Dendritic cell treated with granulocyte-macrophage colony-stimulating factor and Interleukin-4, amounts not matched to agents 40 ng/mL and 50 ng/mL, for 4 days (primary cell): ENCODE measurements at regions of chr14 and their contacts with region 1.

Region 1: DNA sequence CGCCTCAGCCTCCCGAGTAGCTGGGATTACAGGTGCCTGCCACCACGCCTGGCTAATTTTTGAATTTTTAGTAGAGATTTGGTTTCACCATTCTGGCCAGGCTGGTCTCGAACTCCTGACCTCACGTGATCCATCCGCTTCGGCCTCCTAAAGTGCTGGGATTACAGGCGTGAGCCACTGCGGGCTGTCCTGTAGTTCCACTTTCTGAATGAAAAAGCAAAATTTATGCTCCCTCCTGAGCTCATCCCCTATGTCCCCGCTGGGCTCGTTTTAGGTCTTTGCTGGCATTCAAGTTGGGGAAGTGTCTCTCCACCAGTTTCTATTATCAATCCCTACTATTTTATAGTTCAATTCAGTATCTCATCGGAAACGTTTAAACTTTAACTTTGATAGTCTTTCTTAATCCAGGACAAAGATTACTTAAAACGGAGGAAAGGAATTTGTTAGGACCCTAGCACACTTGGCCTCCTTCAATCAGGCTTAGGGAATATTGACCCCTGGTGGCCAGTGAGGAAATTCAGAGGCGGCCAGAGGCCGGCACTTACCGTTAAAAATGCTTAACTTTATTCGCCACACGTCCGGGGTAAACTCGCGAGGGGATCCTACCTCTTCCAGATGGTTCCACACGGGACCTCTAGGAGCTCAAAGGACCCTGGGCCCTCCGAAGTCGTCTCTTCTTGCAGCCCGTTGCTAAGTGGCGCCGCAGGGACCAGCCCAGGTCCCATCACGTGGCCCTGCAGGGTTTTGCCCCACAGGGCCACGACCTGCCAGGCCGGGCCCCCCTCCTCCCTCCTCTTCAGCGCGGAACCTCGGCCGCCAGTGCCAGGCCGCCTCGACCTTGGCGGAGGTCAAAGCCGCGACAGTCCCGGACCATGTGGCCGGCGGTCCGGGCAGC is 11.4 kb upstream of the DNAL1 start:
- H3K4me3 Mint-ChIP-seq: peak overlapping the region; percentile 86
- H3K27ac Mint-ChIP-seq: peak overlapping the region; percentile 84
- H3K4me1 Mint-ChIP-seq: peaks cover 15% of the 10 kb centered on the region
- H3K27me3 Mint-ChIP-seq: peaks cover 37% of the 10 kb centered on the region

Region 2: DNA sequence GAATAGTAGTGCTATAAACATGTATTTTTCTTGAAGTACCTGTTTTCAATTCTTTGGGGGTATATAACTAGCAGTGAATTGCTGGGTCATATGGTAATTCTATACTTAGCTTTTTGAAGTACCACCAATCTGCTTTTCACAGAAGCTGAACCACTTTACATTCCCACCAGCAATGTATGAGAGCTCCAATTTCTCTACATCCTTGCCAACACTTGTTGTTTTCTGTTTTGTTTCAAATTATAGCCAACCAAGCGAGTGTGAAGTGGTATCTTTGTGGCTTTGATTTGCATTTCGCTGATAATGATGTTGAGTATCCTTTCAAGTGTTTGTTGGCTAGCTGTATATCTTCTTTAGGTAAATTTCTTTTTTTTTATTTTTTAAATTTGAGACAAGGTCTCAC is 300.3 kb before region 1 on chr14:
- intact Hi-C with region 1: no loop called
- H3K4me3 Mint-ChIP-seq: no peak overlapping the region
- H3K27ac Mint-ChIP-seq: no peak overlapping the region
- H3K4me1 Mint-ChIP-seq: peaks cover 7% of the 10 kb centered on the region
- H3K27me3 Mint-ChIP-seq: no peaks in the 10 kb centered on the region

Region 3: GRCh38 chr14:73418227-73418626 is 215.1 kb before region 1 on chr14:
- intact Hi-C with region 1: no loop called
- H3K4me3 Mint-ChIP-seq: no peak overlapping the region
- H3K27ac Mint-ChIP-seq: no peak overlapping the region
- H3K4me1 Mint-ChIP-seq: peaks cover 33% of the 10 kb centered on the region
- H3K27me3 Mint-ChIP-seq: no peaks in the 10 kb centered on the region

Region 4: DNA sequence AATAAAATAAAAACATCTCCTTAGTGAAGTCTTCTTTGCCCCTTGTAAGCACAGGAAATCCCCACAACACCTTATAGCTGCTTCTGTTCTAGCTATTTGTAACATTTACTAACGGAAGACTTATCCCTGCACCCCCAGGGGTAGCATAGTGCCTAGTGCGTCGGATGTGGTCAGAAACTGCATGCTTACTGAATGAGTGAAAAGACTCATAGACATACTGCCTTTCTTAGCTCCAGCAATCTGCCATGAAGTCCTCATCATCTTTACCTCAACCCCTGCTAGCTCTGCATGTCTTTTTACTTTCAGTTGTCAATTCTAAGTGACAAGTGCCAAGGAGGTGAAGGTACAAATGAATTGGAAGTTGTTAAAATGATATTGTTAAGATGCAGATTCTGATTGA is 129.7 kb before region 1 on chr14:
- intact Hi-C with region 1: loop called (anchors 1 kb)
- H3K4me3 Mint-ChIP-seq: no peak overlapping the region
- H3K27ac Mint-ChIP-seq: no peak overlapping the region
- H3K4me1 Mint-ChIP-seq: no peaks in the 10 kb centered on the region
- H3K27me3 Mint-ChIP-seq: no peaks in the 10 kb centered on the region

Region 5: GRCh38 chr14:73886449-73887317 is 253.3 kb after region 1 on chr14 and contains the start of gene ZNF410:
- intact Hi-C with region 1: no loop called
- H3K4me3 Mint-ChIP-seq: peak within 1 kb of the TSS; percentile 88
- H3K27ac Mint-ChIP-seq: peak within 1 kb of the TSS; percentile 97
- H3K4me1 Mint-ChIP-seq: peaks cover 38% of the 10 kb centered on the region
- H3K27me3 Mint-ChIP-seq: no peaks in the 10 kb centered on the region